HEK293T (cell line): ENCODE measurements at regions of chr2 and their contacts with region 1.

Region 1: DNA sequence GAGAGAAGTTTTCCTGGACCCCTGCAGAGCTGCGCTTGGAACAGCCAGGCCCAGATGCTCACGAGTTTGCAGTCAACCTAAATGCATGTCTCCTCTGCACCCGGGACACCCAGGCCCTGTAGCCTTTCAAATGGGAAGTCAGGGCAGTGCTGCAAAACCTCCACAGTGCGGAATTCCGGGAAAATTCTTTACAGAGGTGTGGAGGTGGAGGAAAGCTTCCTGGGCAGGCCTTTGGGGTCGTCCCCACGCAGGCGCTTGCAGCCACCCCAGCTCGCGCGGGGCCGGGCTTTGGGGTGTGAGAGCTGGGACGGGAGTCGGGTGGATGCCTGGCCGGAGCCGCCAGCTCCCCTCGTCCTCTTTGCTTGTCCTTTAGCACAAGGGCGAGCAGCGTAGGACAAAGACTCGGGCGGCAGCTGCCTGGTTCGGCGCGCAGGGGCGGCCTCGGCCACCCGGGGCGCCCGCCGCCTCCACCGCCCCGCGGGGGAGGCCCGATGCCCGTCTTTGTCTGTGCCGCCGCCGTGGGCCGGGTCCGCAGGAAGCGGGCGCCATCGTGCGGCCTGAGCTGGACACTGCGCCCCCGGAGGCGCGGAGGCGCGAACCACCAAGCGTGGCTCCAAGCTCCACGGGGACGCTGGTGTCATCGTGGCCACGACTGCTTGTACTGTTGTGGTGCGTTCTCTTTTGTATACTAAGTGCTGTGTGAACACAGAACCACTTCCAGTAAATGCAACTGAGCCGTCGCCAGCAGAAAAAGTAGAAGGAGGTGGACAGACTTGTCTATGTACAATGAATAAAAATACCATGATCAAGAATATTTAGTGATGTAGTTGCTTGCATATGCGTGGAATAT is 28.2 kb upstream of the BCL11A start:
- DNase-seq: peak; percentile 88

Region 2: DNA sequence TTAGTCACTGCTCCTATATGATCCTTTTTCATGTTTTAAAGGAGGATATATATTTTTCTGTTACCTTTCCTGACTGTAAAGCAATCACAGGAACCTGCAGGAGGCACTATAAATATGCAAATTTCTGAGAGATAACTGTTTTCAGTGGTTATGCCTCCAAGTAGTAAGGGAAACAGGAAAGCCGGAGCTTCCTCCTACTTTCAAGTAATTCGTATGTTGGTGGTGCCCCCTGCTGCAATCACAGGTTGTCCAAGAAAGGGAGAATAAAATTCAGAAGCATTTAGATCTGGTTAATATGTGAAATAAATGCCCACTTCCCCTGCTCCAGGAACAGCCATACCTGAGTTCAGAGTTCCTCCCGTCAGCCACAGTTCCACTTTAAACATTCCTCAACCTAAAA is 16.2 kb before region 1 on chr2:
- CTCF ChIA-PET with region 1: interaction called, 13 read pairs
- POLR2A ChIA-PET with region 1: no interaction called
- DNase-seq: no peak

Region 3: GRCh38 chr2:60597346-60597745 is 15.7 kb after region 1 on chr2:
- CTCF ChIA-PET with region 1: no interaction called
- POLR2A ChIA-PET with region 1: no interaction called
- DNase-seq: no peak